Activated CD4-positive, alpha-beta T cell treated with anti-CD3 and anti-CD28 coated beads, Interleukin-2, amount 10 ng/mL, durations not matched to agents 24 days and 14 days (primary cell): ENCODE measurements at regions of chr10 and their contacts with region 1.

Region 1: DNA sequence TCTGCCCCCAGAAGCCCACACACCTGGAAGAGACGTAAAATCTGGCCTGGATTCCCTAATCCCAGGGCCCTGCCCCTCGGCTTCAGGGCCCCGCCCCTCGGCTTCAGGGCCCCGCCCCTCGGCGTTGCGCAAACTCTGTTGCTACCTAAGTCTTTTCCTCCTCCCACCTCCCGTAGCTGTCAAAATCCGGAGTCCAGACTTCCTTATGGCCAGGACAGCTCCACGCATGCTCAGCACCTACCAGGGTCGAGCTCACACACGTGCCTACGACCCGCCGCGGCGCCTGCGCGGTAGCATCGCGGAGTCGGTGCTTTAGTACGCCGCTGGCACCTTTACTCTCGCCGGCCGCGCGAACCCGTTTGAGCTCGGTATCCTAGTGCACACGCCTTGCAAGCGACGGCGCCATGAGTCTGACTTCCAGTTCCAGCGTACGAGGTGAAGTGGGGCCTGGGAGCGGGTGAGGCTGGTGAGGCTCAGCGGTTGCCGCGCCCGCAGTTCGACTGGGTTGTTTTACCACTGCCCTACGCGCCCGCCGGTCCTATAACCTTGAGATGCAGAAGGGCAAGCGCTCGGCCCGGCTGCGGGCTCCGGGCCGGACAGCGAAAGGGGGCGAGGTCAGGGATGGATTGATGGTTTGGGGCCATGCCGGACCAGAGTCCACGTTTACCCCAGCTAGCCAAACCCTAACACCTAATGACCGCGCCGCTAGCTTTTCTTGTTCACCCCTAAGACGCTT is at the start of gene CISD1:
- DNase-seq: peak; percentile 99
- H3K4me3 Mint-ChIP-seq: peak within 1 kb of the TSS; percentile 100
- H3K27ac Mint-ChIP-seq: peak within 1 kb of the TSS; percentile 98
- H3K4me1 Mint-ChIP-seq: peaks cover 31% of the 10 kb centered on the region
- H3K27me3 Mint-ChIP-seq: peaks cover 2% of the 10 kb centered on the region
- total RNA-seq, gene CISD1: 62.6 and 64.2 TPM in 2 replicates

Region 2: GRCh38 chr10:58237014-58237830 is 31.8 kb before region 1 on chr10:
- intact Hi-C with region 1: loop called (anchors 1 kb)
- DNase-seq: no peak
- H3K4me3 Mint-ChIP-seq: no peak overlapping the region
- H3K27ac Mint-ChIP-seq: peak overlapping the region; percentile 91
- H3K4me1 Mint-ChIP-seq: peaks cover 38% of the 10 kb centered on the region
- H3K27me3 Mint-ChIP-seq: no peaks in the 10 kb centered on the region

Region 3: GRCh38 chr10:58282615-58283014 is 13.6 kb after region 1 on chr10:
- intact Hi-C with region 1: loop called (anchors 1 kb)
- DNase-seq: peak; percentile 81
- H3K4me3 Mint-ChIP-seq: peak overlapping the region; percentile 63
- H3K27ac Mint-ChIP-seq: peak overlapping the region; percentile 70
- H3K4me1 Mint-ChIP-seq: peaks cover 32% of the 10 kb centered on the region
- H3K27me3 Mint-ChIP-seq: no peaks in the 10 kb centered on the region